Activated CD8-positive, alpha-beta T cell treated with anti-CD3 and anti-CD28 coated beads for 36 hours (primary cell): ENCODE measurements at regions of chr2 and their contacts with region 1.

Region 1: GRCh38 chr2:85551698-85552678 is 9.3 kb downstream of the GGCX start:
- DNase-seq: peak; percentile 92
- ATAC-seq: peak; percentile 96
- H3K4me3 Mint-ChIP-seq: no peak overlapping the region
- H3K27ac Mint-ChIP-seq: no peak overlapping the region
- H3K4me1 Mint-ChIP-seq: no peaks in the 10 kb centered on the region
- H3K27me3 Mint-ChIP-seq: no peaks in the 10 kb centered on the region
- CTCF ChIP-seq: peak; percentile 91

Region 2: GRCh38 chr2:85385746-85386145 is 166.2 kb before region 1 on chr2:
- CTCF ChIA-PET with region 1: interaction called, 108 read pairs
- POLR2A ChIA-PET with region 1: interaction called, 6 read pairs
- intact Hi-C with region 1: no loop called
- DNase-seq: no peak
- ATAC-seq: no peak
- H3K4me3 Mint-ChIP-seq: no peak overlapping the region
- H3K27ac Mint-ChIP-seq: no peak overlapping the region
- H3K4me1 Mint-ChIP-seq: no peaks in the 10 kb centered on the region
- H3K27me3 Mint-ChIP-seq: no peaks in the 10 kb centered on the region
- CTCF ChIP-seq: no peak

Region 3: GRCh38 chr2:85409845-85410583 is 142.0 kb before region 1 on chr2 and contains the start of gene CAPG:
- CTCF ChIA-PET with region 1: interaction called, 18 read pairs
- POLR2A ChIA-PET with region 1: interaction called, 331 read pairs
- intact Hi-C with region 1: no loop called
- DNase-seq: peak; percentile 61
- ATAC-seq: peak; percentile 21
- H3K4me3 Mint-ChIP-seq: peak within 1 kb of the TSS; percentile 45
- H3K27ac Mint-ChIP-seq: no peak within 1 kb of the TSS
- H3K4me1 Mint-ChIP-seq: peaks cover 49% of the 10 kb centered on the region
- H3K27me3 Mint-ChIP-seq: no peaks in the 10 kb centered on the region
- CTCF ChIP-seq: no peak
- total RNA-seq, gene CAPG: 18.7 to 19.3 TPM

Region 4: GRCh38 chr2:85430752-85431569 is 121.0 kb before region 1 on chr2:
- CTCF ChIA-PET with region 1: interaction called, 10 read pairs
- POLR2A ChIA-PET with region 1: interaction called, 382 read pairs
- intact Hi-C with region 1: no loop called
- DNase-seq: no peak
- ATAC-seq: no peak
- H3K4me3 Mint-ChIP-seq: no peak overlapping the region
- H3K27ac Mint-ChIP-seq: no peak overlapping the region
- H3K4me1 Mint-ChIP-seq: peaks cover 10% of the 10 kb centered on the region
- H3K27me3 Mint-ChIP-seq: no peaks in the 10 kb centered on the region
- CTCF ChIP-seq: no peak

Region 5: DNA sequence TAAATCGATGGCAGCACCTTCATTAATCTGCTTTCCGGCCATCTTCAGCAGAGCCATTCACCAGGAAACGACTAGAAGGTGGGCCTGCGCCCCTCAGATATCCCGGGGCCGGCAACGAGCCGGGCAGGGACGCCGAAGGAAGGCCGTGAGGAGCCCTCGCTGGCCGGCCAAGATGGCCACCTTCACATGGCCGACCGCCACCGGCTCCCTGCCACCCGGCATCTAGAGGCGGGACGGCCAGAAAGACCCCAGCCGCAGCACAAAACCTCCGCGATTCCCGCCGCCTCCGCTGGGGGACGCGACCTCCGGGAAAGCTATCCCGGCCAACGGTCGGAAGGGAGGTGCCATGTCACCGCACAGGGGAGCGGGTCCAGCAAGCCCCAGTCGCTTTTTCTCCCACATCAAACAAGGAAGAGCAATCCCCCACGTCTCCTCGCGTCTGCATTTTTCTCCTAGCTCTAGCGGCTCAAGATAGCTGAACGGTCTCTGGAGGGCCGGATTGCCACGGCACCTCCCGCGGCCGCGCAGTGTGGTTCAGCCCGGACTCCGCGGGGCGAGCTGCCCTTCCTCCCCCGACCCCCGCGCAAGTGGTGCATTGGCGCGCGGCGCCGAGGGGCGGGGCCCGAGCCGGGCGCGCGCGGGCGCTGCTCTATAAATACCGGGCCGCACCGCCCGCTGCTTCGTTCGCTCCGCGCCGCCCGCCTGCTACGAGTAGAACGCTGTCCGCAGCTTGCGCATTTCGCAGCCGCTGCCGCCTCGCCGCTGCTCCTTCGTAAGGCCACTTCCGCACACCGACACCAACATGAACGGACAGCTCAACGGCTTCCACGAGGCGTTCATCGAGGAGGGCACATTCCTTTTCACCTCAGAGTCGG is 13.3 kb before region 1 on chr2 and contains the start of gene MAT2A:
- CTCF ChIA-PET with region 1: interaction called, 58 read pairs
- POLR2A ChIA-PET with region 1: interaction called, 467 read pairs
- intact Hi-C with region 1: no loop called
- DNase-seq: peak; percentile 91
- ATAC-seq: peak; percentile 86
- H3K4me3 Mint-ChIP-seq: peak within 1 kb of the TSS; percentile 99
- H3K27ac Mint-ChIP-seq: peak within 1 kb of the TSS; percentile 99
- H3K4me1 Mint-ChIP-seq: peaks cover 41% of the 10 kb centered on the region
- H3K27me3 Mint-ChIP-seq: no peaks in the 10 kb centered on the region
- CTCF ChIP-seq: peak; percentile 65
- total RNA-seq, gene MAT2A: 276 to 282 TPM

Region 6: GRCh38 chr2:85577386-85578242 is 25.6 kb after region 1 on chr2 and contains the start of gene VAMP8:
- CTCF ChIA-PET with region 1: interaction called, 8 read pairs
- POLR2A ChIA-PET with region 1: interaction called, 11 read pairs
- intact Hi-C with region 1: no loop called
- DNase-seq: peak; percentile 78
- ATAC-seq: peak; percentile 76
- H3K4me3 Mint-ChIP-seq: peak within 1 kb of the TSS; percentile 96
- H3K27ac Mint-ChIP-seq: peak within 1 kb of the TSS; percentile 90
- H3K4me1 Mint-ChIP-seq: peaks cover 22% of the 10 kb centered on the region
- H3K27me3 Mint-ChIP-seq: no peaks in the 10 kb centered on the region
- CTCF ChIP-seq: no peak
- total RNA-seq, gene VAMP8: 84.5 to 91.1 TPM